ENCODE measurements at regions of chr14 and their contacts with region 1.

Region 1: GRCh38 chr14:60561845-60562746 is 53.1 kb downstream of the SIX6 start:
- DNase-seq: peak in 4 of 5 donors; percentile 13 to 46 (median 36)
- ATAC-seq: peak; percentile 68 to 89 (median 82)
- H3K4me3 ChIP-seq: no peak overlapping the region
- H3K27ac ChIP-seq: no peak overlapping the region
- H3K4me1 ChIP-seq: peaks cover 0 to 6% (median 0%) of the 10 kb centered on the region in 12 donors
- H3K27me3 ChIP-seq: no peaks in the 10 kb centered on the region
- CTCF ChIP-seq: peak; percentile 28 to 73 (median 59)
- POLR2A ChIP-seq: no peak

Region 2: GRCh38 chr14:60064491-60065072 is 497.5 kb before region 1 on chr14:
- intact Hi-C with region 1: loop called in 2 of 10 experiments (anchors 10 kb)
- DNase-seq: no peak
- ATAC-seq: no peak
- H3K4me3 ChIP-seq: no peak overlapping the region
- H3K27ac ChIP-seq: no peak overlapping the region
- H3K4me1 ChIP-seq: no peaks in the 10 kb centered on the region
- H3K27me3 ChIP-seq: no peaks in the 10 kb centered on the region
- CTCF ChIP-seq: peak; percentile 38 to 78 (median 66)
- POLR2A ChIP-seq: no peak

Region 3: DNA sequence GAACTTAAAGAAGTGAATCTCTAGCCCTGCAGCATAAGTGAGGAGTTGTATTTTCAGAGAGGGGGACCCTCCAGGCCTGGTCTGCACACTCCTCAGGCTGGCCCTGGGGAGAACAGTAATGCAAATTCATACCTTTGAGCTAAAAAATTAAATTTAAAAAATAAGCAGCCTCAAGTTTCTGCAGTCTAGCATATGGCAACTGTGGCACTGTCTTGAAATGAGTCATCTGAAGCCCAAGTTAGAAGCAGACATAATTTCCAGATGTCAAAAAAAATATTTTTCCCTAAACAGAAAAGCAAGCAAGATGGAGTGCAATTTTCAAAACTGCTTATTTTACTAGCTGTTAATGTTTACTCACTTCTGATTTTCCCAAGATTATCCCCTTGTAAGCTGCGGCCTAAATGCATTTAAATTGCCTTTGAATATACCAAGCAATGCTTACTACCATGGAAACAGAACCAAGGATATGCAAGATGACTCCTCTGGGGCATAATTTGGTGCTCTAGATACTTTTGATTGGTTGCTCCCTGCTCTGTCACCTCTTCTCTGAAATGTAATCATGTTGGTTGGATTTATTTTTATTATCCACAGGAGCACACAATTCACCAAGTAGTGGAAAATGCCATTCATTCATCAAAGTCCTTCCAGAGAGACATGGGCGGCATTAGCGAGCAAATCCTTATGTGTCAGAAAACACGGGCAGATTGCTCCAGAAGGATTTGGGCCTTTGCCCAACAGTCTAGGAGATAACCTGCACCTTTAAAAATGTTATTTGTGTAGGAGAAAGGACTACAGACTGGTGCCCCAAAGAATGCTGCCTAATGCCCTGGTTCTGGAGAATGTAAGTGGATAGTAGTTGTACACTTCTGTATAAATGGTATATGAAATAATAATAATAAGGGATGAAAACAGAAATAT is 371.9 kb before region 1 on chr14:
- intact Hi-C with region 1: loop called (anchors 2 to 10 kb)
- DNase-seq: no peak
- ATAC-seq: no peak
- H3K4me3 ChIP-seq: no peak overlapping the region
- H3K27ac ChIP-seq: no peak overlapping the region
- H3K4me1 ChIP-seq: no peaks in the 10 kb centered on the region
- H3K27me3 ChIP-seq: no peaks in the 10 kb centered on the region
- CTCF ChIP-seq: no peak
- POLR2A ChIP-seq: no peak

Region 4: GRCh38 chr14:60349663-60350365 is 212.3 kb before region 1 on chr14:
- intact Hi-C with region 1: loop called (anchors 2 to 10 kb)
- DNase-seq: peak in 2 of 5 donors; percentile 9 to 20
- ATAC-seq: peak in 3 of 4 donors; percentile 60 to 69 (median 66)
- H3K4me3 ChIP-seq: peak overlapping the region in 6 of 12 donors; percentile 9 to 25 (median 19)
- H3K27ac ChIP-seq: no peak overlapping the region
- H3K4me1 ChIP-seq: peaks cover 0 to 6% (median 0%) of the 10 kb centered on the region in 12 donors
- H3K27me3 ChIP-seq: no peaks in the 10 kb centered on the region
- CTCF ChIP-seq: peak; percentile 42 to 75 (median 66)
- POLR2A ChIP-seq: no peak